Head of caudate nucleus (tissue), 42 donors: ENCODE measurements at regions of chr10 and their contacts with region 1.

Region 1: DNA sequence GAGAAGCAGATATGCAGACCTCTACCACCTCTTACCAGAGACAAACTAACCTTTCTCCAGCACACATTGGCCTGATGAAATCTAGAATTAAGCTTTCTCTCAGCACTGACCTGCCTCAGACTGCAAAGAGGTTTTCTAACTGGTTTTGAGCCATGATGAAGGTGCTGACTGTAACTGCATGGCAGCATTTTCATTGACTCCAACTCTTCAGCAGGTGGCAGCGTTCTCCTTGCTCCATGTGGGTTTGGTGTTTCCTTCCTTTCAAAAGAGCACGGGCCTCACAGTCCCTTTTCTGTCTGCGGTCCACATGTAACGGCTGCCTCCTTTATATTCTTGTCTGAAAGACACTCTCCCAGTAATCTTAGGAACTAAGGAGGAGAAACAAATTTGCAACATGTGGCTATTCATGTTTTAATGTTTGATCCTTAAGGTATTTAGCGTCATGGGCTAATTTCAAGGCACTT is 12.6 kb downstream of the KLLN start:
- DNase-seq: peak in 41 of 42 donors; percentile 24 to 81 (median 59)

Region 2: DNA sequence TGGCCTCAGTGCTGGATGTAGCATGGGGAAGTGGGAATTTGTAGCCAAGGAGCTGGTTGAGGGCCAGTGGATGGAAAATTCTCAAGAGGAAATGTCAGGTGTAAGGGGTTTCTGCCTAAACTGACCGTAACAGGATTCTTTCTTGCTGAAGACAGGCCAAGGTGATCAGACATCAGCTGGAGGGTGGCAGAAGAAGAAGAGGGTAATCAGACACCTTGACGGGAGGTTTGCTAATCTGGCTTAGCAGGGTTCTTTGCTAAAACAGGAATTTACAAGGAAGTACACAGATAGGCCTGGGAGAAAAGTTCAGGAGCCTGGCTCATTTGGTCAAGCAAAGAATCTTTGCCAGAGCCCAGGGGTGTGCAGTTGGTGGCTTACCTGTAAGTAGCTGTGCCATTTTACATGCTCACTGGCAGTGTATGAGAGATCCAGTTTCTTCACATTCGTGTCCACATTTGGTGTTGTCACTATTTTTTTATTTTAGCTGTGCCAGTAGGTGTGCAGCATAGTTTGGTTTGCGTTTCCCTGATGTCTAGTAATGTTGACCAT is 1020.7 kb before region 1 on chr10:
- intact Hi-C with region 1: no loop called
- DNase-seq: no peak

Region 3: GRCh38 chr10:88553116-88553752 is 702.5 kb after region 1 on chr10:
- intact Hi-C with region 1: loop called (anchors 10 kb)
- DNase-seq: peak in 36 of 42 donors; percentile 3 to 70 (median 40)